ENCODE measurements at regions of chr3 and their contacts with region 1.

Region 1: GRCh38 chr3:101849721-101850245 is 469 bp downstream of the NFKBIZ start:
- DNase-seq: peak in 5 of 6 donors; percentile 43 to 87 (median 72)
- ATAC-seq: peak; percentile 5 to 52 (median 24)
- H3K4me3 ChIP-seq: peak overlapping the region; percentile 73 to 100 (median 90)
- H3K27ac ChIP-seq: peak overlapping the region; percentile 99 to 100 (median 100)
- H3K4me1 ChIP-seq: peaks cover 34 to 43% (median 39%) of the 10 kb centered on the region in 3 donors
- H3K27me3 ChIP-seq: no peaks in the 10 kb centered on the region
- CTCF ChIP-seq: no peak

Region 2: DNA sequence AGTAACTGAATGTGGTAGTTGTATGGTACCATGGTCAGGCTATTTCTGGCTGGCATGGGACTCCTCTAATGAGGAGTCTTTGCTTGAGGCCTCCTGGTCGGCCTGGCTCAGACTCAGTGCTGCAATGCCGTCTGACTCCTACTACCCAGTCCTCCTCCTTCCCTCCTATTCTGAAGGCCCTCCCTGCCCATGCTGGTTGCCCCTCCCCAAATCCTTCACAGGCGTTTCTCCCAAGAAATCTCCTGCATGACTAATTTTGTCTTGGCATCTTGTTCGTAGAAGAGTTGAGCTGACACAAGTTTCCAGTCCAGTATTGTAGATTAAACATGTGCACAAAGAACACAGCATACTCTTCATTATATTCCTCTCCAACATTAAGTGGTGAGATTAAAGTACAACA is 115.1 kb after region 1 on chr3:
- intact Hi-C with region 1: no loop called
- DNase-seq: no peak
- ATAC-seq: no peak
- H3K4me3 ChIP-seq: no peak overlapping the region
- H3K27ac ChIP-seq: no peak overlapping the region
- H3K4me1 ChIP-seq: no peaks in the 10 kb centered on the region
- H3K27me3 ChIP-seq: no peaks in the 10 kb centered on the region
- CTCF ChIP-seq: no peak

Region 3: GRCh38 chr3:102180291-102181039 is 330.7 kb after region 1 on chr3:
- intact Hi-C with region 1: loop called in 1 of 3 experiments (anchors 10 kb)
- DNase-seq: no peak
- ATAC-seq: peak; percentile 47 to 72 (median 68)
- H3K4me3 ChIP-seq: peak overlapping the region in 1 of 4 donors; percentile 10
- H3K27ac ChIP-seq: peak overlapping the region; percentile 9 to 80 (median 66)
- H3K4me1 ChIP-seq: peaks cover 28 to 54% (median 50%) of the 10 kb centered on the region in 3 donors
- H3K27me3 ChIP-seq: no peaks in the 10 kb centered on the region
- CTCF ChIP-seq: no peak